ENCODE measurements at regions of chr10 and their contacts with region 1.

Region 1: GRCh38 chr10:42552493-42553407 is 85.6 kb downstream of the ZNF33B start:
- DNase-seq: peak; percentile 95 to 97
- ATAC-seq: peak; percentile 99 to 100 (median 99)
- H3K4me3 ChIP-seq: peak overlapping the region; percentile 57 to 93 (median 71)
- H3K27ac ChIP-seq: peak overlapping the region in 9 of 10 donors; percentile 41 to 78 (median 70)
- H3K4me1 ChIP-seq: peaks cover 0 to 24% (median 16%) of the 10 kb centered on the region in 9 donors
- H3K27me3 ChIP-seq: no peaks in the 10 kb centered on the region
- CTCF ChIP-seq: no peak

Region 2: GRCh38 chr10:42638055-42638820 is 85.5 kb after region 1 on chr10 and contains the start of gene ZNF33B:
- intact Hi-C with region 1: loop called in 4 of 10 experiments (anchors 1 to 10 kb)
- DNase-seq: peak; percentile 91 to 95
- ATAC-seq: peak; percentile 98 to 100 (median 99)
- H3K4me3 ChIP-seq: peak within 1 kb of the TSS; percentile 59 to 88 (median 80)
- H3K27ac ChIP-seq: peak within 1 kb of the TSS; percentile 67 to 95 (median 92)
- H3K4me1 ChIP-seq: peaks cover 0 to 12% (median 5%) of the 10 kb centered on the region in 9 donors
- H3K27me3 ChIP-seq: no peaks in the 10 kb centered on the region
- CTCF ChIP-seq: no peak
- total RNA-seq, gene ZNF33B: 9.3 to 19.3 (median 14.2) TPM

Region 3: DNA sequence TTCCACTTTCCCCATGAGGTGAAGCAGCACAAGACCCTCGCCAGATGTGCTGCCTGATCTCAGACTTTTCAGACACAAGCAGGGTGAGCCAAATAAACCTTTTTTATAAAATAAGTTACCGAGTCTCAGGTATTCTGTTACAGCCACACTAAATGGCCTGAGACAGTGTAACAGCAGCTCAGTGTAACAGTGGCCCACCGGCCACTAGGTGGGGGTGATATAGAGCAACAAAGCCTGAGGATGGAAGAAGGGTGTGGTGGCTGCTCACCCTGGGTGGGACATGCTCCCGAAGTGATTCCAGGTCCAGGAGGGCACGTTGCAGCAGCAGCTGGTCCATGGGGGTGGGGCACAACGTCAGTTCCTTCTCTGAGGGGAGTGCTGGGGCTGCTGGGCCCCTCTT is 274.5 kb after region 1 on chr10:
- intact Hi-C with region 1: no loop called
- DNase-seq: no peak
- ATAC-seq: no peak
- H3K4me3 ChIP-seq: no peak overlapping the region
- H3K27ac ChIP-seq: peak overlapping the region in 1 of 10 donors; percentile 15
- H3K4me1 ChIP-seq: peaks cover 0 to 11% (median 5%) of the 10 kb centered on the region in 9 donors
- H3K27me3 ChIP-seq: no peaks in the 10 kb centered on the region
- CTCF ChIP-seq: peak in 2 of 9 donors; percentile 19 to 22

Measured in heart right ventricle (tissue), 16 donors.